ENCODE measurements at regions of chr9 and their contacts with region 1.

Region 1: GRCh38 chr9:136686794-136687711 is at the start of gene AGPAT2:
- DNase-seq: peak; percentile 90
- ATAC-seq: peak; percentile 82
- total RNA-seq, gene AGPAT2: 48.6 TPM

Region 2: GRCh38 chr9:136539427-136540421 is 147.3 kb before region 1 on chr9:
- intact Hi-C with region 1: no loop called
- DNase-seq: peak; percentile 94
- ATAC-seq: peak; percentile 74

Region 3: DNA sequence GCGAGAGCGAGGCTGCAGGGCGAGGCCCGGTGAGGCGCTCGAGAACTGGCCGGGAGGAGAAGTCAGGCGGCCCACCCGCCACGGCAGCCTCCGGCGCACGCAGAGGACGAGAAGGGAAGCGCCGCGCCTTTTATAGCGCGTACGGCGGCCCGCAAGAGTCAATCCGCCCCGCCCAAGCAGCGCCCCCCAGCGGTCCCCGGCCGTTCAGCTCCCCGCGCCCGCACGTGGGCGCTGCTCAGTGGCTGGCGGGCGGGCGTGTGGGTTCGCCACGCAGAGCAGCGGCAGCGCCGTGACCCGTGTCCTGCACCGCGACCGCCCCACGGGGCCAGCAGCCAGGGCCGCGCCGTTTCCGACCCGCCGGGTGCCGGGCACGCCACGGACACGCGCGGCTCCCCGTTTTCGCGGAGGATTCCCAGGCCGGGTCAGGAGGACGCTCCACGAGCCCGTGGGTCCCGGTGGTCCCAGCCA is 41.1 kb after region 1 on chr9:
- intact Hi-C with region 1: loop called (anchors 5 kb)
- DNase-seq: peak; percentile 95
- ATAC-seq: peak; percentile 88

Measured in Right ventricle myocardium superior (tissue), 1 donor.